ENCODE measurements at regions of chr2 and their contacts with region 1.

Region 1: GRCh38 chr2:195318440-195319111 is 338.4 kb upstream of the SLC39A10 start:
- DNase-seq: peak; percentile 16
- H3K4me3 Mint-ChIP-seq: no peak overlapping the region
- H3K27ac Mint-ChIP-seq: no peak overlapping the region
- H3K4me1 Mint-ChIP-seq: peaks cover 19% of the 10 kb centered on the region
- H3K27me3 Mint-ChIP-seq: no peaks in the 10 kb centered on the region

Region 2: GRCh38 chr2:194166818-194167217 is 1151.8 kb before region 1 on chr2:
- intact Hi-C with region 1: loop called (anchors 2 kb)
- DNase-seq: no peak
- H3K4me3 Mint-ChIP-seq: no peak overlapping the region
- H3K27ac Mint-ChIP-seq: no peak overlapping the region
- H3K4me1 Mint-ChIP-seq: no peaks in the 10 kb centered on the region
- H3K27me3 Mint-ChIP-seq: no peaks in the 10 kb centered on the region

Region 3: GRCh38 chr2:195021711-195022507 is 296.7 kb before region 1 on chr2:
- intact Hi-C with region 1: no loop called
- DNase-seq: no peak
- H3K4me3 Mint-ChIP-seq: no peak overlapping the region
- H3K27ac Mint-ChIP-seq: peak overlapping the region; percentile 6
- H3K4me1 Mint-ChIP-seq: peaks cover 4% of the 10 kb centered on the region
- H3K27me3 Mint-ChIP-seq: peaks cover 1% of the 10 kb centered on the region

Measured in activated T-helper 2 cell treated with anti-CD3 and anti-CD28 coated beads, Interferon-gamma antibody, Interleukin-2, Interleukin-4, amounts not matched to agents 10 μg/mL and 5 μg/mL and 100 μg/mL, durations not matched to agents 14 hours and 24 hours and 36 hours (primary cell).